ENCODE measurements at regions of chr17 and their contacts with region 1.

Region 1: GRCh38 chr17:61073799-61074513 is 325.7 kb upstream of the TBX2 start:
- DNase-seq: no peak
- ATAC-seq: peak; percentile 37; the same call in 1 of the 2 replicates
- H3K4me3 ChIP-seq: no peak overlapping the region
- H3K27ac ChIP-seq: no peak overlapping the region
- H3K4me1 ChIP-seq: no peaks in the 10 kb centered on the region
- H3K27me3 ChIP-seq: no peaks in the 10 kb centered on the region
- CTCF ChIP-seq: no peak

Region 2: GRCh38 chr17:60604686-60605352 is 469.1 kb before region 1 on chr17:
- CTCF ChIA-PET with region 1: no interaction called
- POLR2A ChIA-PET with region 1: no interaction called
- intact Hi-C with region 1: no loop called
- DNase-seq: peak; percentile 25
- ATAC-seq: no peak
- H3K4me3 ChIP-seq: no peak overlapping the region
- H3K27ac ChIP-seq: no peak overlapping the region
- H3K4me1 ChIP-seq: peaks cover 14% of the 10 kb centered on the region
- H3K27me3 ChIP-seq: no peaks in the 10 kb centered on the region
- CTCF ChIP-seq: no peak

Region 3: GRCh38 chr17:61180368-61180767 is 106.4 kb after region 1 on chr17:
- CTCF ChIA-PET with region 1: no interaction called
- POLR2A ChIA-PET with region 1: interaction called, 18 read pairs
- intact Hi-C with region 1: no loop called
- DNase-seq: no peak
- ATAC-seq: no peak
- H3K4me3 ChIP-seq: no peak overlapping the region
- H3K27ac ChIP-seq: no peak overlapping the region
- H3K4me1 ChIP-seq: no peaks in the 10 kb centered on the region
- H3K27me3 ChIP-seq: no peaks in the 10 kb centered on the region
- CTCF ChIP-seq: no peak